ENCODE measurements at regions of chr6 and their contacts with region 1.

Region 1: DNA sequence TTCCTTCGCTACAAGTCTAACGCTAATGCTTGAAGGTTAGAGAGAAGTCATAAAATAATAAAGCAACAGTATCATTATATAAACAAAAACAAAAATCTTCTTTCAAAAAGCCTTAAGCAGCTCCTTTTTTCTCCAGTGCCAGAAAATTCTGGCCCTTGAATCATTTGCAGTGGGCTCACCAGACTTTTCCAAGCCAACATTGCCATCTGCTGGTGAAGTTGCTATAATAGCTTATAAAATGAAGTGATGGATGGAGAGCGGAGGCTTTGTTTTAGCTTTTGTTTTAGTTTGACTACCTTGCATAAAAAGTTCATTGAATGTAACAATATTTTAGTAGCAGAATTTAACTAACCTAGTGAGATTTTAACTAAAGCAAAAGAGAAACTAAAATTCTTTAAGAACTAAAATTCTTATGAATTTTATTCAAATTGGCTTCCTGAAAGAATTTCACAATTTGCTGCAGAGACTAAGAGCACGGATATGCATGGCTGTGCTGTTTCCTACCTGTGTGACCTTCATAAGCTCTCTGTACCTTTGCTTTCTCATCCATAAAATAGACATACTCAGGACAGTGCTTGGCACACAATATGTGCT is 44.8 kb upstream of the SLC2A12 start:
- DNase-seq: peak in 3 of 6 donors; percentile 28 to 71 (median 48)
- ATAC-seq: peak; percentile 56 to 83 (median 80)
- H3K4me3 ChIP-seq: no peak overlapping the region
- H3K27ac ChIP-seq: no peak overlapping the region
- H3K4me1 ChIP-seq: no peaks in the 10 kb centered on the region
- H3K27me3 ChIP-seq: no peaks in the 10 kb centered on the region
- CTCF ChIP-seq: peak; percentile 20 to 51 (median 42)

Region 2: GRCh38 chr6:133568970-133569889 is 528.0 kb before region 1 on chr6:
- intact Hi-C with region 1: loop called in 1 of 3 experiments (anchors 10 kb)
- DNase-seq: no peak
- ATAC-seq: peak; percentile 53 to 92 (median 85)
- H3K4me3 ChIP-seq: peak overlapping the region in 1 of 4 donors; percentile 23
- H3K27ac ChIP-seq: no peak overlapping the region
- H3K4me1 ChIP-seq: no peaks in the 10 kb centered on the region
- H3K27me3 ChIP-seq: peaks cover 0 to 3% (median 0%) of the 10 kb centered on the region in 4 donors
- CTCF ChIP-seq: peak; percentile 44 to 79 (median 73)

Region 3: GRCh38 chr6:133923938-133924593 is 173.1 kb before region 1 on chr6:
- intact Hi-C with region 1: loop called in 2 of 3 experiments (anchors 5 to 10 kb)
- DNase-seq: peak in 3 of 6 donors; percentile 49 to 79 (median 50)
- ATAC-seq: peak; percentile 96 to 98 (median 97)
- H3K4me3 ChIP-seq: no peak overlapping the region
- H3K27ac ChIP-seq: no peak overlapping the region
- H3K4me1 ChIP-seq: no peaks in the 10 kb centered on the region
- H3K27me3 ChIP-seq: peaks cover 0 to 6% (median 0%) of the 10 kb centered on the region in 4 donors
- CTCF ChIP-seq: peak; percentile 62 to 83 (median 73)

Region 4: DNA sequence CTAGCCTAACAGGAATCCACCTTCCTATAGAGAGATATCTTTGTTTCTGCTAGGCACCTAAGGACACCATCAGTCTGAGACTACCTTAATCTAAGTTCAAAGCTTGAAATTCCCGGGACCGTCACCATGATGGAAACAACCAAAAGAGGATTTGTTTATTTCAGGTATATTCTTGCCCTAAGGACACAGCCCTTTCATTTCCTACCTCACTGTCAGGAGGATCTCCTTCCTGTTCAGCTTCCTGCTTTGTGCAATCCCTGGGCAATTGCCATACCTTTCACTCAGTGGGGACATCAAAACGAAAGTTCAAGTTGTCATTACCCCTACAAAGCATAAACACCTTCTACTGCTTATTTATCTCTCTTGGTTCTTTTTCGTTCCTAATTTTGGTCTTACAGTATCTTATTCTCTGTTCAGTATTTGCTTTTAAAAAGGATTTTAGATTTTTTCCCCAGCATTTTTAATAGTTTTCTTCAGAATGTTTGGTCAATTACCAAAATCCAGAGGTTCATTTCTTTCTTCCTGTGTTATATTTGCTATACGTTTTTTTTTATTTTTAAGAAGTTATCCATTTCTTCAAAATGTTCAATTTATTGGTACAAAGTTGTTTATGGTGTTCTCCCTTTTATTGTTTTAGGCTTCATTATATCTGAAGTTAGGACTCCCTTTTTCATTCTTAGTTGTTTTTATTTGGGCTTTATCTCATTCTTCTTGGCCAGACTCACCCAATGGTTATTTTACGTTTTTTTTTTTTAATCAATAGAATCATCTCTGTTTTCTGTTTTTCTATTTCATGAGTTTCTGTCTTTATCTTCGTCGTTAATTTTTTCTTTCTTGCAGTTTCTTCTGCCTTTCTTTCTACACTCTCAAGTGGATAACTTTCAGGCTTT is 157.2 kb before region 1 on chr6:
- intact Hi-C with region 1: loop called in 1 of 3 experiments (anchors 10 kb)
- DNase-seq: no peak
- ATAC-seq: no peak
- H3K4me3 ChIP-seq: no peak overlapping the region
- H3K27ac ChIP-seq: no peak overlapping the region
- H3K4me1 ChIP-seq: no peaks in the 10 kb centered on the region
- H3K27me3 ChIP-seq: no peaks in the 10 kb centered on the region
- CTCF ChIP-seq: no peak

Measured in pancreas (tissue), 10 donors.